ENCODE measurements at regions of chr7 and their contacts with region 1.

Region 1: GRCh38 chr7:128455551-128456254 is at the start of gene HILPDA:
- DNase-seq: peak; percentile 92 to 97 (median 94)
- H3K4me3 ChIP-seq: peak within 1 kb of the TSS; percentile 70 to 89
- H3K4me3 Mint-ChIP-seq: peak within 1 kb of the TSS; percentile 86 to 97 (median 94)
- H3K27ac ChIP-seq: peak within 1 kb of the TSS; percentile 76
- H3K27ac Mint-ChIP-seq: peak within 1 kb of the TSS; percentile 84 to 98 (median 96)
- H3K4me1 ChIP-seq: peaks cover 25% of the 10 kb centered on the region
- H3K4me1 Mint-ChIP-seq: peaks cover 17 to 30% (median 22%) of the 10 kb centered on the region in 4 donors
- H3K27me3 ChIP-seq: no peaks in the 10 kb centered on the region
- H3K27me3 Mint-ChIP-seq: no peaks in the 10 kb centered on the region
- total RNA-seq, gene HILPDA: 3.4 to 4.5 TPM

Region 2: GRCh38 chr7:127667017-127667670 is 788.6 kb before region 1 on chr7:
- CTCF ChIA-PET with region 1: no interaction called
- POLR2A ChIA-PET with region 1: no interaction called
- intact Hi-C with region 1: no loop called
- DNase-seq: no peak
- H3K4me3 ChIP-seq: no peak overlapping the region
- H3K4me3 Mint-ChIP-seq: no peak overlapping the region
- H3K27ac ChIP-seq: no peak overlapping the region
- H3K27ac Mint-ChIP-seq: peak overlapping the region in 3 of 7 donors; percentile 5 to 62 (median 31)
- H3K4me1 ChIP-seq: no peaks in the 10 kb centered on the region
- H3K4me1 Mint-ChIP-seq: peaks cover 35 to 82% (median 52%) of the 10 kb centered on the region in 4 donors
- H3K27me3 ChIP-seq: no peaks in the 10 kb centered on the region
- H3K27me3 Mint-ChIP-seq: no peaks in the 10 kb centered on the region

Region 3: DNA sequence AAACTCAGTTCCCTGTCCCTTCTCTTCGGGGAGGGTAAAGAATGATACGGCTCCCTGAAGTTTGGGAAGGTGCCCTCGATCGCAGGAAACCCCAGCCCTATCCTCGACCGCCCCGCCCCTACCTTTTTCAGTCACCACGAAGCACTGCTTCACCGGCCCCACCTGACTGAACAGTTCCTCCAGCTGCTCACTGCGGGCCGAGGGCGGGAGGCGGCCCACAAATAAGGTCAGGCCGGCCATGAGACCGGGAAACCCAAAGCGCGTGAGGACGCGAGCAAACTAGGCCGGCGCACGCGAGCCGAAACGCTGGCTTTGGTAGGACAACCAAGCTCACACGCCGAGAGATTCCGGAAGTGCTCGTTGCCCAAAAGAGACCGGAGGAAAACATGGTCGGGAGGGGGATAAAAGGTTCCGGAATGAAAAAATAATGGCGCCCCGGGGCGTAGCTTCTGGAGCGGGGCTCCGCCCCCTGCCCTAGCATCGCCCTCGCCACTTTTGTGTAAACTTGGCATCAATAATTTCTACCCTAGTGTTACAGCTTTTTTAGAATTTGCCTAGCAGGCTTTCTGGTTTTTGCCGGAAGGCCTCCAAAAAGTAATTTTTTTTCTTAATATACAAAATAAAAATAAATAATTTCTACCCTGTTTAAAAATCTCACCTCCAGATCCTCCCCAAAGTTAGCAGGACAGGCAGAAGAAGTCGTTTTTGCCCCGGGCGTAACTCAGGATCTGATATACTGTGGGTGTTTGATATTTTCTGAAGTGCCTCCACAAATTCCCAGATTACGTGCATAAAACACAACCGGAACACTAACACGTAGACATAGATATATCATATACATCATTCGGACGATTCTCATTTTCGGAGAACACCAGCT is 111.9 kb before region 1 on chr7 and contains the start of gene RBM28:
- CTCF ChIA-PET with region 1: interaction called, 26 read pairs
- POLR2A ChIA-PET with region 1: interaction called, 3 read pairs
- intact Hi-C with region 1: loop called (anchors 10 kb)
- DNase-seq: peak; percentile 88 to 93 (median 90)
- H3K4me3 ChIP-seq: peak within 1 kb of the TSS; percentile 82 to 83
- H3K4me3 Mint-ChIP-seq: peak within 1 kb of the TSS; percentile 95 to 98 (median 96)
- H3K27ac ChIP-seq: peak within 1 kb of the TSS; percentile 69
- H3K27ac Mint-ChIP-seq: peak within 1 kb of the TSS; percentile 92 to 97 (median 96)
- H3K4me1 ChIP-seq: peaks cover 27% of the 10 kb centered on the region
- H3K4me1 Mint-ChIP-seq: peaks cover 20 to 40% (median 29%) of the 10 kb centered on the region in 4 donors
- H3K27me3 ChIP-seq: no peaks in the 10 kb centered on the region
- H3K27me3 Mint-ChIP-seq: peaks cover 2 to 3% of the 10 kb centered on the region in 2 donors
- total RNA-seq, gene RBM28: 43.4 to 48.3 TPM

Region 4: GRCh38 chr7:128409596-128410160 is 46.0 kb before region 1 on chr7 and contains the start of gene IMPDH1:
- CTCF ChIA-PET with region 1: interaction called, 70 read pairs
- POLR2A ChIA-PET with region 1: interaction called, 10 read pairs
- intact Hi-C with region 1: loop called (anchors 2 kb)
- DNase-seq: peak; percentile 83 to 91 (median 85)
- H3K4me3 ChIP-seq: peak within 1 kb of the TSS; percentile 68 to 92
- H3K4me3 Mint-ChIP-seq: peak within 1 kb of the TSS; percentile 90 to 96 (median 92)
- H3K27ac ChIP-seq: peak within 1 kb of the TSS; percentile 85
- H3K27ac Mint-ChIP-seq: peak within 1 kb of the TSS; percentile 86 to 95 (median 94)
- H3K4me1 ChIP-seq: peaks cover 45% of the 10 kb centered on the region
- H3K4me1 Mint-ChIP-seq: peaks cover 22 to 43% (median 32%) of the 10 kb centered on the region in 4 donors
- H3K27me3 ChIP-seq: no peaks in the 10 kb centered on the region
- H3K27me3 Mint-ChIP-seq: no peaks in the 10 kb centered on the region
- total RNA-seq, gene IMPDH1: 48.0 to 49.4 TPM

Region 5: DNA sequence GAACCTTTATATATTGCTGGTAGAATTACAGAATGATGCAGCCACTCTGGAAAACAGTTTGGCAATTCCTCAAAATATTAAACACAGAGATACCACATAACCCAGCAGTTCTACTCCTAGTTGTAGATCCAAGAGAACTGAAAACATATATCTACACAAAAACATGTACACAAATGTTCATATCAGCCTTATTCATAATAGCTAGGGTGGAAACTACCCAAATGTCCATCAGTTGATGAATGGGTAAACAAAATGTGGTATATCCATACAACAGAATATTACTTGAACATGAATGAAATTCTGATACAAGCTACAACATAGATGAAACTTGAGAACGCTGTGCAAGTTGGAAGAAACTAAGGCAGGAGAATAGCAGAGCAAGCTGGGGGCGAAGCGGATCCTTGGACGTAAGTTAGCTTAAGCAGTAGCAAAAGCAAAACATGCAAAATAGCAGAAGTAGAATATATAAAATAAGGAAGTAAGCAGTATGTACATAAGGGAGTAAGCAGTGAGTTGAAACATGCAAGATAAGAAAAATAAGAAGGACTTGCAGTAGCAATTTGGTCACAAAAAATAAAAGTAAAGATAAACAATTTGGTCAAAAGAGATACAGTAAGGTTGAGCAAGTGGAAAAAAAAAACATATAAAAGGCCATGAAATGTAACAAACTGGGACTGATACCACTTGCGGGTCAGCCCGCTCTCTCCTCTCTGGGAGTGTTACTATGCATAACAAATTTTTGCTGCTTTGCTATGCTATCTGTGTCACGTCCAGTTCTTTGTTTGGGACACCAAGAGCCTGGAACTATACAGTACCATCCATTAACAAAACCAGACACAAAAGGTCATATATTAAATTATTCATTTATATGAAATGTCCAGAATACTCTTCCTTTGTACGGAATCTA is 18.0 kb before region 1 on chr7:
- CTCF ChIA-PET with region 1: interaction called, 469 read pairs
- POLR2A ChIA-PET with region 1: no interaction called
- intact Hi-C with region 1: no loop called
- DNase-seq: no peak
- H3K4me3 ChIP-seq: no peak overlapping the region
- H3K4me3 Mint-ChIP-seq: peak overlapping the region in 1 of 8 donors; percentile 14
- H3K27ac ChIP-seq: no peak overlapping the region
- H3K27ac Mint-ChIP-seq: no peak overlapping the region
- H3K4me1 ChIP-seq: no peaks in the 10 kb centered on the region
- H3K4me1 Mint-ChIP-seq: no peaks in the 10 kb centered on the region
- H3K27me3 ChIP-seq: no peaks in the 10 kb centered on the region
- H3K27me3 Mint-ChIP-seq: peaks cover 3 to 4% of the 10 kb centered on the region in 2 donors

Region 6: GRCh38 chr7:128713794-128714193 is 258.1 kb after region 1 on chr7:
- CTCF ChIA-PET with region 1: no interaction called
- POLR2A ChIA-PET with region 1: no interaction called
- intact Hi-C with region 1: no loop called
- DNase-seq: no peak
- H3K4me3 ChIP-seq: no peak overlapping the region
- H3K4me3 Mint-ChIP-seq: no peak overlapping the region
- H3K27ac ChIP-seq: no peak overlapping the region
- H3K27ac Mint-ChIP-seq: no peak overlapping the region
- H3K4me1 ChIP-seq: no peaks in the 10 kb centered on the region
- H3K4me1 Mint-ChIP-seq: no peaks in the 10 kb centered on the region
- H3K27me3 ChIP-seq: no peaks in the 10 kb centered on the region
- H3K27me3 Mint-ChIP-seq: peaks cover 7 to 8% of the 10 kb centered on the region in 2 donors

Region 7: GRCh38 chr7:128739048-128739962 is 283.6 kb after region 1 on chr7 and contains the start of gene CALU:
- CTCF ChIA-PET with region 1: no interaction called
- POLR2A ChIA-PET with region 1: no interaction called
- intact Hi-C with region 1: loop called (anchors 10 kb)
- DNase-seq: peak; percentile 93 to 95 (median 94)
- H3K4me3 ChIP-seq: peak within 1 kb of the TSS; percentile 80 to 82
- H3K4me3 Mint-ChIP-seq: peak within 1 kb of the TSS; percentile 98 to 100 (median 99)
- H3K27ac ChIP-seq: peak within 1 kb of the TSS; percentile 91
- H3K27ac Mint-ChIP-seq: peak within 1 kb of the TSS; percentile 97 to 100 (median 98)
- H3K4me1 ChIP-seq: peaks cover 38% of the 10 kb centered on the region
- H3K4me1 Mint-ChIP-seq: peaks cover 27 to 50% (median 39%) of the 10 kb centered on the region in 4 donors
- H3K27me3 ChIP-seq: no peaks in the 10 kb centered on the region
- H3K27me3 Mint-ChIP-seq: peaks cover 0 to 3% of the 10 kb centered on the region in 2 donors
- total RNA-seq, gene CALU: 18.4 to 20.6 TPM